RWPE1 (cell line): ENCODE measurements at regions of chr4 and their contacts with region 1.

Region 1: DNA sequence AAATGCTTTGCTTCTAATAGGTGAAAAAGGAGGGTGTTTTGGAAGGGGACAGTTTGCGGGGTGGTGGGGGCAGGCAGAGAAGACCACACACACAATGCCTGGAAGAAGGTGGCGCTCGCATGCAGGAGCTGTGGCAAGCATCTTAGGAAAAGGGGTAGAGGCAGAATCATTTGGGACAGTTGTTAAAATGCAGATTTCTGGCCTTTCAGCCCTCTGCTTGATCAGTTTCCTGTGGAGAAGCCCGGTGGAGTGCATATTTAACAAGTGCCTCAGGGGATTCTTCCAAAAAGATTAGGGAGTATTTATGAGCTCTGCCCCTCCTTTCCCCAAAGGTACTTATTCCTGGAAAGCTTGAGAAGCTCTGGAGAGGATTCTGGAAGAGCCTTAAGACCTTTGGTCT is 4.8 kb downstream of the NOCT start:
- DNase-seq: no peak
- H3K27ac ChIP-seq: peak overlapping the region; percentile 25; the same call in 1 of the 2 replicates
- CTCF ChIP-seq: no peak

Region 2: GRCh38 chr4:137226898-137227297 is 1793.5 kb before region 1 on chr4:
- CTCF ChIA-PET with region 1: no interaction called
- POLR2A ChIA-PET with region 1: no interaction called
- DNase-seq: peak; percentile 13
- H3K27ac ChIP-seq: no peak overlapping the region
- CTCF ChIP-seq: no peak

Region 3: DNA sequence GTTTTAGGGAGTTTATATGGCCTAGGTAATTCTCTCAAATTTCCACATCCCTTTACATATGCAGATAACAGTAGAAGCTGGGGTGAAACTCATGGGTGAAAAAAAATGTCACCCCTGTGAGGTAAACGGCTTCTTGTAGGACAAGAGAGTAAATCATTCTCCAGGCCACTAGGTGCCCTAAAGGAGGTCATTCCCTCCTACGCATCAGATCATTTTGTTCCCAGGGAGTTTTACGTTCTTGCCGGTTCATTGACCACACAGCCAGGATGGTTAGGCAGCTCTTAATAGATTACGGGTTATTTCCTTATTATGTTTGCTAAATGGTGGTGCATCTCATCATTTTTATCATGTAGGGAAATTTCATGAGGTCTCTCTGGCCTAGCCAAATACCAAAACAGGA is 230.6 kb before region 1 on chr4:
- CTCF ChIA-PET with region 1: no interaction called
- POLR2A ChIA-PET with region 1: no interaction called
- DNase-seq: no peak
- H3K27ac ChIP-seq: no peak overlapping the region
- CTCF ChIP-seq: no peak

Region 4: DNA sequence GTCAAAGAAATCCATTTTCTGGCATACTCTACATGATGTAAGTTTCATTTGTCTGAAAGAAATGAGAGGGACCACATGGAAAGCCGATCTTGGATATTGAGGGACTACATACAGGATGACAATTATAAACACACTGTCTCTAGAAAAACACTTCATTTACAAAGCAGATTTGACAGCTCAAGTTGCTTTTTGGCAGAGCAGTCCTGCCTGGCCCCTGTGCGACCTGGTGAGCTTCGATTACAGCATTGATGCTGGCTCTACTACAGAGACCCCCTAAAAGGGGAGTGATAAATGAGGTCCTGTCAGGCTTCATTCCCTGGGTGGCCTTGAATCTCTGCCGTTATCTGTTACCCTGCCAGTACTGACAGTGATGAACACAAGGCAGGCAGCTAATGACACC is 220.0 kb before region 1 on chr4:
- CTCF ChIA-PET with region 1: no interaction called
- POLR2A ChIA-PET with region 1: no interaction called
- DNase-seq: no peak
- H3K27ac ChIP-seq: no peak overlapping the region
- CTCF ChIP-seq: no peak

Region 5: GRCh38 chr4:139030614-139031235 is 10.3 kb after region 1 on chr4:
- CTCF ChIA-PET with region 1: interaction called, 13 read pairs
- POLR2A ChIA-PET with region 1: no interaction called
- DNase-seq: peak; percentile 42
- H3K27ac ChIP-seq: no peak overlapping the region
- CTCF ChIP-seq: peak; percentile 80